ENCODE measurements at regions of chr12 and their contacts with region 1.

Region 1: DNA sequence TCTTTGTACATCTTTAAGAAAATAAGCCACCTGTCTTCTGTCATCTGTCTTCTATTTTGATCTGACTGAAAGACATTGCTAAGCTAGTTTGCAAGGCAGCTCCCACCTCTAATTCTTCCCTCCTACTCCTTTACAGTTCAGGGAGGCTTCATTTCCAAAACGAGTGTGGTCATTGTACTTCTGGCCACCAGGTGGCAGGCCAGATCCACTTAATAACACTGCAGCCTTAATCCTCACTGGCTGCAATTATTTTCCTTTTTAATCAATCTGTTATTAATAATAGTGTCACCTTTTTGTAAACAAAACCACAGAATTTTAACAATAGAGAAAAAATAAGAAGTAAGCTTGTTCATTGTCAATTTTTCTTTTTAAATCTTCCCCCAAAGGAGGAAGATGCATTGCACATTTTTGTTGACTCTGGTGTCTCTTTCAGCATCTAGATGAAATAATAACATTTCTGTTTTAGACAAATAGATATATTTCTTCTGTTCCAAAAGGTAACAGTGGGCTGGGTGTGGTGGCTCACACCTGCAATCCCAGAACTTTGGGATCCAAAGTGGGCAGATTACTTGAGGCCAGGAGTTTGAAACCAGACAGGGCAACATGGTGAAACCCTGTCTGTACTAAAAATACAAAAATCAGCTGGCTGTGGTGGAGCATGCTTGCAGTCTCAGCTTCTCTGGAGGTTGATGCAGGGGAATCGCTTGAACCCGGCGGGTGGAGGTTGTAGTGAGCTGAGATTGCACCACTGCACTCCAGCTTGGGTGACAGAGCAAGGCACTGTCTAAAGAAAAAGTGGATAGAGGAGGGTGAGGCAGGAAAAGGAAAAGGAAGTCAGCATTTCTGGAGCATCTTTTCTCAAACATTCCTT is 23.3 kb downstream of the GABARAPL1 start:
- DNase-seq: peak; percentile 58
- ATAC-seq: peak; percentile 82
- H3K4me3 Mint-ChIP-seq: no peak overlapping the region
- H3K27ac Mint-ChIP-seq: peak overlapping the region; percentile 32
- H3K4me1 Mint-ChIP-seq: peaks cover 10% of the 10 kb centered on the region
- H3K27me3 Mint-ChIP-seq: no peaks in the 10 kb centered on the region
- CTCF ChIP-seq: peak; percentile 96

Region 2: DNA sequence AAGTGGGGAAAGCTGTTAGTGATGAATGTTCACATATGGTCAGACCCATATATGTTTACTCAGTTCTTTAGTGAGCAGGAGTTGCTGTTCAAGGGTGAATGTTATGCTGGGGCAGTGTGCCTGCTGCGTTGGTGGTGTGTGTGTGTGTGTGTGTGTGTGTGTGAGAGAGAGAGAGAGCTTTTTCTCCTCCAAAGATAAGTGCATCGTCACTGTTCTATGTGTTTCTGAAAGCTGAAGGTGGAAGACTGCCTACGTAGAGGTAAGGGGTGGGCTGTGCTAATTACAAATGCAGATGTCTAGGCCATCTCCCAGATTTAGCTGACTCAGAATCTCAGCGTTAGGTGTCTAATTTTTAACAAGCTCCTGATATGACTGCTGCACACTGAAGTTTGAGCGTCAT is 12.8 kb before region 1 on chr12:
- CTCF ChIA-PET with region 1: interaction called, 12 read pairs
- POLR2A ChIA-PET with region 1: no interaction called
- intact Hi-C with region 1: no loop called
- DNase-seq: no peak
- ATAC-seq: no peak
- H3K4me3 Mint-ChIP-seq: no peak overlapping the region
- H3K27ac Mint-ChIP-seq: no peak overlapping the region
- H3K4me1 Mint-ChIP-seq: peaks cover 9% of the 10 kb centered on the region
- H3K27me3 Mint-ChIP-seq: no peaks in the 10 kb centered on the region
- CTCF ChIP-seq: no peak

Region 3: DNA sequence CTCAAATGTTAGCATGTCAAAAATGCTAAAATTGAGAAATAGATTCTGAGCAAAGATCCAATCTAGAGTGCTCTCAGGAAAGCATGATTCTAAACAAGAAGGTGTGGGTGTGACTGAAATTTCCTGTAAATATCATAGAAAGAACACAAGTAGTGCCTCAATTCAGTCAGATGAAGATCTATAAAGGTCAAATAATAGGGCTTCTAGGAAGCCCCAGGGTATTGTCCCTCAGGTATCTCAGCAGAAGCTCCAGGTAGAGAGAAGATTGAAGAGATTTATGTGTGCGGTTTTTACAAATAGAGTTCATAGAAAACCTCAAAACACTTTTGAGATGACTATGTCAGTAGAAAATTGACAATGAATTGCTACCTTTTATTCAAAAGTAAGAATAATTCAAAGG is 84.6 kb after region 1 on chr12:
- CTCF ChIA-PET with region 1: interaction called, 24 read pairs
- POLR2A ChIA-PET with region 1: no interaction called
- intact Hi-C with region 1: no loop called
- DNase-seq: peak; percentile 34
- ATAC-seq: peak; percentile 90
- H3K4me3 Mint-ChIP-seq: no peak overlapping the region
- H3K27ac Mint-ChIP-seq: peak overlapping the region; percentile 85
- H3K4me1 Mint-ChIP-seq: peaks cover 47% of the 10 kb centered on the region
- H3K27me3 Mint-ChIP-seq: no peaks in the 10 kb centered on the region
- CTCF ChIP-seq: no peak

Region 4: DNA sequence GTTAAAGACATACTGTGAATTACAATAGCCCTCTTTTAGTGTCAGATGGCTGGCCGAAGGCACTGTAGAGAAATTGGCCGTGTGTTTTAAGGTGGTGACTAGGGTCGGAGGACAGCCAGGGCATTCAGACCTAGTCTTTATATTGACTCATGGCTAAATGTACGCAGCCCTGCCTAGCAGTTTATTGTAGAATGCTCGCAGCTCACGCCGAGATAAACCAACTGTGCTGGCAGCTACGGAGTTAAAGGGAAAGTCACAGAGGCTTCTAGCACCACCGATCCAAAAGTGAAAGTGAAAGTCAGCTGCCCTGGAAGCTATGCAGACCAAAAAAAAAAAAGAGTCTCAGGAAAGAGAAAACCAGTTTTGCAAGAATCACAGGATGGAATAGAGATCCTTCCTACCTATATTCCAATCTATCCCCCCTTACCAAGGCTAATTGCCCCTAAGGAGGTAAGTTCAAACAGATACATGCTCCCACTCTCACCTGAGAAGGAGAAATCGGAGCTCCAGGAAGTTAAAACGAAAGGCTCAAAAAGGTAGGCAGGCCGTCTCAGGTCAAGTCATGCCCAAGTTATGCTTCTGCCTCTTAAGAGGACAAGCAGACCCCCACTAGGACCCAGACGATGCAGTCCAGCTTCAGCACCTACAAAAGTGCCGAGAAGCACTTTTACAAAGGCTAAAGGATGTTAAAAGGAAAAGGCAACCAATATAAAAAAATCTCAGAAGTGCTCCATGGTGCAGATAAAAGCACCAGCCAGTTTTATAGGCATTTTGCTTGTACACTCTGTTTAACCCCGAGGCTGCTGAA is 129.0 kb after region 1 on chr12:
- CTCF ChIA-PET with region 1: interaction called, 26 read pairs
- POLR2A ChIA-PET with region 1: no interaction called
- intact Hi-C with region 1: loop called (anchors 10 kb)
- DNase-seq: peak; percentile 83
- ATAC-seq: peak; percentile 62
- H3K4me3 Mint-ChIP-seq: no peak overlapping the region
- H3K27ac Mint-ChIP-seq: no peak overlapping the region
- H3K4me1 Mint-ChIP-seq: peaks cover 41% of the 10 kb centered on the region
- H3K27me3 Mint-ChIP-seq: no peaks in the 10 kb centered on the region
- CTCF ChIP-seq: no peak

Region 5: DNA sequence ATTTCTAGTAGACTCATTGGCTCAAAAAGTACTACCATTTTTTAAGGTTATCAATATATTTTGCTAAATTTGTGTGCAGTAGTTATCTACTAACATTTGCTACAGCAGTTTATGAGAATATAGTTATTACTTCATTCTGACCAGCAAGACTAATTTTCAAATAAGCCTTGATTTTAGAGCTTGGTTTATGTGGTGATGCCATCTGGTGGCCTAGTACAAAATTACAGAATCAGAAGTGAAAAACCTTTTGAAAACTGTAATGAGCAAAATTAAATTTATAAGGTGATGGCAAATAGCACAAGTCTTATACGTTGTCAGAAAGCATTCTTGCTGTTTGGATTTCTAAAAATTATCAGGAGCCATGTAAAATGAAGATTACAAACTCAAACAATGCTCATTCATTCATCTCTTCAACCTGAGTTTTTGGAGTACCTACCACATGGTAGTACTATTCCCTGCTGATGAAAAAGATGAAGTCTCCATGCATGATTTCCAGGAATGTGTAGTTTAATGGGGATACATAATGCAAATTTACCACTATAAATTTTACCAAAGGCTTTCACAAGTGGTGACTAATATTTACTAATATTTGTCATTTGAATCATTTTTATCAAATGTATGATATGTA is 326.4 kb after region 1 on chr12:
- CTCF ChIA-PET with region 1: interaction called, 36 read pairs
- POLR2A ChIA-PET with region 1: no interaction called
- intact Hi-C with region 1: loop called (anchors 2 kb)
- DNase-seq: peak; percentile 35
- ATAC-seq: no peak
- H3K4me3 Mint-ChIP-seq: peak overlapping the region; percentile 10
- H3K27ac Mint-ChIP-seq: peak overlapping the region; percentile 58
- H3K4me1 Mint-ChIP-seq: peaks cover 70% of the 10 kb centered on the region
- H3K27me3 Mint-ChIP-seq: no peaks in the 10 kb centered on the region
- CTCF ChIP-seq: peak; percentile 87

Region 6: DNA sequence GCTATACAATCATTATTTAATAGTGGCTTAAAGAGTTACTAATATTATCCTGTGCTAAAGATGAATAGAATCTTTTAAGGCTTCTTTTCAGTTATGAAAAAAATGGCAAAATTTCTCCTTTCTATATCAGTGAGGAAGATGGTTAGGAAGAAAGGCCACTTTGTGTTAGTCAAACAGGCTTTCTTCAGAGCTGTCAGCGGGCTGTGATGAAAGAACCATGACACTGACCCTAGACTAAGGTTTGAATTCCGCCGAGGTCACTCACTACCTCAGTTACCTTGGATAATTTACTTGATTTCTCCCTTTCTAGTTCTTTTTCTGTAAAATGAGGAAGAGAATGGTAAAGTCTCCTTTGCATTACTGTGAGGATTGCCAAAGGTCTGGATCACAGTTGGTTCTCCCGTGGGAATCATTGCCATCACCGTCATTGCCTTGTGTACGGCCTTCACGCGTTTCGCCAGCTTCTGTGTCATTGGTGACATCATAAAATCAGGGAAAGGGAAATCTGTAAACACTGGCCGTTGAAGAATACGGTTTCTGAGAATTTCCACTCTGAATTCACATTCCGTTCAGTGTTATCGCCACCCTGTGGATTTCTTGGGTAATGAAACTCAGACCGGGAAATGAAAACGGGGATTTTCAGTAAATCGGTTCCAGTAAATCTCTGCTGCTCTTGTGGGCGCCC is 513.8 kb after region 1 on chr12:
- CTCF ChIA-PET with region 1: interaction called, 11 read pairs
- POLR2A ChIA-PET with region 1: no interaction called
- intact Hi-C with region 1: no loop called
- DNase-seq: peak; percentile 85
- ATAC-seq: peak; percentile 99
- H3K4me3 Mint-ChIP-seq: peak overlapping the region; percentile 67
- H3K27ac Mint-ChIP-seq: peak overlapping the region; percentile 22
- H3K4me1 Mint-ChIP-seq: peaks cover 8% of the 10 kb centered on the region
- H3K27me3 Mint-ChIP-seq: peaks cover 28% of the 10 kb centered on the region
- CTCF ChIP-seq: peak; percentile 95